ENCODE measurements at regions of chr19 and their contacts with region 1.

Region 1: GRCh38 chr19:15015946-15016542 is 33.2 kb upstream of the CASP14 start:
- DNase-seq: no peak
- ATAC-seq: no peak
- H3K4me3 ChIP-seq: no peak overlapping the region
- H3K27ac ChIP-seq: no peak overlapping the region
- H3K4me1 ChIP-seq: no peaks in the 10 kb centered on the region
- H3K27me3 ChIP-seq: no peaks in the 10 kb centered on the region; the same call in 1 of the 2 replicates
- CTCF ChIP-seq: no peak

Region 2: DNA sequence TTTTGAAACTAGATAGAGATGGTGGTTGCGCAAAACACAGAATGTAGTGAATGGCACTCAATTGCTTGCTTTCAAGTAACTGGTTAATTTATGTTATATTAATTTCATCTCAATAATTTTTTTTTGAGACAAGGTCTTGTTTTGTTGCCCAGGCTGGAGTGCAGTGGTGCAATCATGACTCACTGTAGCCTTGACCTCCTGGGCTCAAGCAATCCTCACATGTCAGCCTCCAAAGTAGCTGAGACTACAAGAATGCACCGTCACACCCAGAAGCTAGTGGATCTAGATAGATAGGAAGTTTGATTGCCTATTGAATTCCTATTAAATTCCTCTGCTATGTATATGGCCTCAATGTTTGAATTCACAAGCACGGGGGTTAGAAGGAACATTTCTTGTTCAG is 211.3 kb before region 1 on chr19:
- CTCF ChIA-PET with region 1: no interaction called
- POLR2A ChIA-PET with region 1: no interaction called
- in situ Hi-C with region 1: no loop called
- intact Hi-C with region 1: no loop called
- DNase-seq: no peak
- ATAC-seq: no peak
- H3K4me3 ChIP-seq: no peak overlapping the region
- H3K27ac ChIP-seq: no peak overlapping the region
- H3K4me1 ChIP-seq: no peaks in the 10 kb centered on the region
- H3K27me3 ChIP-seq: no peaks in the 10 kb centered on the region
- CTCF ChIP-seq: no peak

Region 3: DNA sequence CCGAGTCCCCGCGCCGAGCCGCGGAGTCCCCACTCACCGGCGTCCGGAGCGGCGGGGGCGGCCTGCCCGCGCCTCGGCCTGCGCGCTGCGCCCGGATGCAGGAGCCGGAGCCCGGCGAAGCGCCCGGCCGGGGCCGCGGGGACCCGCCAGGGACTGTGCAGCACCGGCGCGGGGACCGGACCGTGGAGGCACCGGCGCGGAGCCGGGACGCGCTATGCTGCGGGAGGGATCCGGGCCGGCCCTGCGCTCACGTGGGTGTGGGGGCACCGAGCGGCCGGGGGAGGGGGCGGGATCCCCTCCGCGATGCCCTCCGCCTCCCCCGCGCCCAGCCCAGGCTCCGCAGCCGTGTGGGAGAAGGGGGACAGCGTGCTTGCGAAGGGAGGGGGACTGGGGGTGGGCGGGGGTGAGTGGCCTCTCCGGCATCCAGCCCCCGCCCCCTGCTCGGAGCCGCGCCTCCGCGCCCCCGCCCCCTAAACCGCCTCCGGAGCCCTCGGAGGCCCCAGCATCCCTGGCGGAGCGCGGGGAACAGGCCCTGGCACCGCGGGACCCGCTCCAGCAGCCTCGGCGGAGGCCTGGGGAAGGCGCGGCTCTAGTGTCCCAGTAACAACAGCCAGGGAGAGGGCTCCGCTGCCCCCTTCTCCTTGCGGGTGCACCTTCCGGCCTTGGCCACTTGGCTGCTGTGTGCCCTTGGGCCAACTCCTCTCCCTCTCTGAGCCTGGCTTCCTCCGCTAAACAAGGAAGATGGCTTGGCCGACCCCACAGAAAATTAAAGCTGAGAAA is 36.4 kb before region 1 on chr19 and contains the start of gene SLC1A6:
- CTCF ChIA-PET with region 1: no interaction called
- POLR2A ChIA-PET with region 1: interaction called, 10 read pairs
- in situ Hi-C with region 1: no loop called
- intact Hi-C with region 1: no loop called
- DNase-seq: no peak
- ATAC-seq: no peak
- H3K4me3 ChIP-seq: no peak within 1 kb of the TSS
- H3K27ac ChIP-seq: no peak within 1 kb of the TSS
- H3K4me1 ChIP-seq: no peaks in the 10 kb centered on the region
- H3K27me3 ChIP-seq: no peaks in the 10 kb centered on the region
- CTCF ChIP-seq: no peak
- total RNA-seq, gene SLC1A6: 0.15 TPM

Region 4: DNA sequence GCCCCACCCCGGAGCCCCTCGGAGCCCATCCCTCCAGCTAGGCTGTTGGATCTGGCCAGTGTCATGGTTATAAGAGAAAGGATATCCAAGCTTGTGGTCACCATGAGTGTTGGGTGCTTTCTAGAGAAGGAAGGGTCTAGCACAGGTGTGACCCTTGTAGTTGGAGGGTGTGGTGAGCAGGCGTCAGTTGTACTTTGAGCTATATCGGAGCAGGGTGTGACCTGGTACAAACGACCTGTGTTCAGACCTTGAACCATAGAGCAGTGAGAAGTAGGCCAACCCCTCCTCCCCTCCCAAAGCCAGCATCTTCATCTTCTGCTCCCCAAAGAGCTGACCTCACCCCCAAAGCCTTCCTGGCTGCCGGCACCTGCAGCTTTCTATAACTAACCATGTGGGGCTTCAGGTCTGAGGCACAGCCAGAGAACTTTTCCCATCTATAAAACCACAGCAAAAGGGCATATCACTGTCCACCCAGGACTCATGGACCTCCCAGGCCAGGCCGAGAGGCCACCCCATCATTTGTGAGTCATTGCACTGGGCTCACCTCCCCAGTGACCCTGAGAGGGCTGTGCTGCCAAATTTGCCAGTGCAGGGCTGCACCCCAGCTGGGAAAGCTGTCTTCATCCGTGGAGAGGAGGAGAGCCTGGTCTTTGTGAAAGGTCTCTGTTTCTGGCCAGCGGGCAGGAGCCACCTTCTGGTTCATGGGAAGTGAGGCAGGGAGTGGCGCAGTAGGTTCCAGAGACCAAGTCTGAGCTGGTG is 1109.9 kb after region 1 on chr19:
- CTCF ChIA-PET with region 1: interaction called, 12 read pairs
- POLR2A ChIA-PET with region 1: no interaction called
- in situ Hi-C with region 1: no loop called
- intact Hi-C with region 1: no loop called
- DNase-seq: no peak
- ATAC-seq: 0 out of 2 replicates have a peak, but pooled peaks have one; percentile 18
- H3K4me3 ChIP-seq: no peak overlapping the region
- H3K27ac ChIP-seq: no peak overlapping the region
- H3K4me1 ChIP-seq: no peaks in the 10 kb centered on the region
- H3K27me3 ChIP-seq: no peaks in the 10 kb centered on the region
- CTCF ChIP-seq: no peak